Heart left ventricle (tissue), 16 donors: ENCODE measurements at regions of chr20 and their contacts with region 1.

Region 1: DNA sequence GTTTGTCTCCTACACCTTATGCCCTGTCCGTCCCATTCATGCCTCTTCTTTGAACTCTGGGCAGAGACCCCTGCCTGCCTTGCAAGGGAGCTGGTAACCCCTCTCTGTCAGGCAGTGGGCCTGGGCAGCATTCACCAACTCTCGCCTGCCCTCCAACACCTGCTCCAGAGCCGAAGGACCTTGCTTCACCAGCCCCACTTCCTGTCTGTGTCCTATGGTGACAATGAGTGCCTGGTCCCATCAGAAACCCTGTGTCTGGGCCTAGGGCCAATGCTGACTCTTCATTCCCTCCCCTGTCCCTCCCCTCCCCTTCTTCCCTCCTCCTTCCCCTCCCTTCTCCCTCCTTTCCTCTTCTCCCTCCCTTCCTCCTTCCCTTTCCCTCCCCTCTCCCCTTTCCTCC is 22.8 kb upstream of the PCMTD2 start:
- DNase-seq: peak in 3 of 5 donors; percentile 51 to 74 (median 57)
- ATAC-seq: peak; percentile 35 to 59 (median 50)
- H3K4me3 ChIP-seq: no peak overlapping the region
- H3K27ac ChIP-seq: peak overlapping the region in 4 of 12 donors; percentile 17 to 54 (median 23)
- H3K4me1 ChIP-seq: peaks cover 0 to 19% (median 7%) of the 10 kb centered on the region in 12 donors
- H3K27me3 ChIP-seq: no peaks in the 10 kb centered on the region
- CTCF ChIP-seq: no peak
- POLR2A ChIP-seq: no peak

Region 2: DNA sequence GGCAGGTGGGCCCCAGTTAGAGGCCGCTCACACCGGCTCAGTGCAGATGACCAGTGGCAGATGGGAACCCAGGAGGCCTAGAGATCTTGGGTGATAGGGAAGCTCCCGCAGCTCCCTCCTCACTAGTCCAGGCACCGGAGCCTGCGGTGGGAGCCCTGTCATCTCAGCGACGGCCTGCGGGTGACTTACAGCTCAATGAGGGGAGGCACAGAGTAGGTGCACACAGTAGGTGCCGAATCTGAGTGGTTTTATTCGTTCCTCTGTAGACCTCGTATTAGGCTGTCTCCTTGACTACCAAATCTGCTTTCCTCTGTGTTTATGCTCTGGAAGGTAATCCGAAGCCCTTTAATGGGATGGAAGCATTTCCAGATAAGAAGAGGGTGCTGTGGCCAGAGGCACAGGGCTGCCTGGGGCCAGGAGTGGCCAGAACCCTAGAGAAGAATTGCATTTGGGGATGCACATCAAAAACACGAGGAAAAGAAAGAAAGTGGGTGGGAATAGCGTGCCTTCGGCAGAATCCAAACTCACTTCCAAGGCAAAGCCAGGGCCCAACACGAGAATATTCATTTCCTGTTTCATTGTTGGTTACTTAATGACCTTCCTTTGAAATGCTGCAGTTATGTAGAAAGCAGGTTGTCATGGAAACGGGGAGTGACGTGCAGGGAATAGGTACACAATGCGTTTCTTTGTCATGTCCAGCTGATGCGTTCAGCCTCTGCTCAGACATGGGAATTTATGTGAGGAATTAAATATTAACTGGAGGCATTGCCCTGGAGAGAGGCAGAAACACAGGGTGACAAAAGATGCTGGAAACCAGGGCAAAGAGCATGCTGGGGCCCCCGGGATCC is 43.9 kb before region 1 on chr20:
- intact Hi-C with region 1: no loop called
- DNase-seq: no peak
- ATAC-seq: peak in 1 of 4 donors; percentile 75
- H3K4me3 ChIP-seq: no peak overlapping the region
- H3K27ac ChIP-seq: no peak overlapping the region
- H3K4me1 ChIP-seq: peaks cover 0 to 8% (median 0%) of the 10 kb centered on the region in 12 donors
- H3K27me3 ChIP-seq: peaks cover 0 to 32% (median 5%) of the 10 kb centered on the region in 9 donors
- CTCF ChIP-seq: no peak
- POLR2A ChIP-seq: no peak

Region 3: GRCh38 chr20:64212755-64213154 is 20.0 kb before region 1 on chr20:
- intact Hi-C with region 1: loop called in 1 of 10 experiments (anchors 1 kb)
- DNase-seq: peak; percentile 69 to 88 (median 77)
- ATAC-seq: peak; percentile 88 to 92 (median 92)
- H3K4me3 ChIP-seq: no peak overlapping the region
- H3K27ac ChIP-seq: peak overlapping the region in 11 of 12 donors; percentile 2 to 86 (median 70)
- H3K4me1 ChIP-seq: peaks cover 0 to 35% (median 16%) of the 10 kb centered on the region in 12 donors
- H3K27me3 ChIP-seq: no peaks in the 10 kb centered on the region
- CTCF ChIP-seq: no peak
- POLR2A ChIP-seq: no peak